ENCODE measurements at regions of chr15 and their contacts with region 1.

Region 1: DNA sequence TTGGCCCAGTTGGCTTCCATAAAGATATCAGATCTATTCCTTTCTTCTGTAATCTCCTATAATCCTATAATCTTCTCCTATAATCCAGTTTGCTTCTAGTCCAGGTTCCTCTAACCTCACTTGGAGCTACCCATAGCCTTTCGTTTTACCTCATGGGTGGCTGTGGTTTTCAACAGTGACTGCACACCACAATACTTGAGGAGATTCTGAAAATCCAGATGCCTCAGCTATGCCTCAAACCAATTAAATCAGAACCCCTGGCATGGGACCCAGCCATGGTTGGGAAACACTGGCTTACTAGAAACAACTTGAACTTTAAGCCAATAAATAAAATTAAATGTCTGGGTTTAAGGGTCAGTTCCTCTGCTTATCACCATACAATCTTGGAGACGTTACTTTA is 86.1 kb upstream of the NTRK3 start:
- DNase-seq: no peak
- H3K4me3 Mint-ChIP-seq: no peak overlapping the region
- H3K27ac Mint-ChIP-seq: no peak overlapping the region
- H3K4me1 Mint-ChIP-seq: no peaks in the 10 kb centered on the region
- H3K27me3 Mint-ChIP-seq: peaks cover 39% of the 10 kb centered on the region
- CTCF ChIP-seq: no peak

Region 2: DNA sequence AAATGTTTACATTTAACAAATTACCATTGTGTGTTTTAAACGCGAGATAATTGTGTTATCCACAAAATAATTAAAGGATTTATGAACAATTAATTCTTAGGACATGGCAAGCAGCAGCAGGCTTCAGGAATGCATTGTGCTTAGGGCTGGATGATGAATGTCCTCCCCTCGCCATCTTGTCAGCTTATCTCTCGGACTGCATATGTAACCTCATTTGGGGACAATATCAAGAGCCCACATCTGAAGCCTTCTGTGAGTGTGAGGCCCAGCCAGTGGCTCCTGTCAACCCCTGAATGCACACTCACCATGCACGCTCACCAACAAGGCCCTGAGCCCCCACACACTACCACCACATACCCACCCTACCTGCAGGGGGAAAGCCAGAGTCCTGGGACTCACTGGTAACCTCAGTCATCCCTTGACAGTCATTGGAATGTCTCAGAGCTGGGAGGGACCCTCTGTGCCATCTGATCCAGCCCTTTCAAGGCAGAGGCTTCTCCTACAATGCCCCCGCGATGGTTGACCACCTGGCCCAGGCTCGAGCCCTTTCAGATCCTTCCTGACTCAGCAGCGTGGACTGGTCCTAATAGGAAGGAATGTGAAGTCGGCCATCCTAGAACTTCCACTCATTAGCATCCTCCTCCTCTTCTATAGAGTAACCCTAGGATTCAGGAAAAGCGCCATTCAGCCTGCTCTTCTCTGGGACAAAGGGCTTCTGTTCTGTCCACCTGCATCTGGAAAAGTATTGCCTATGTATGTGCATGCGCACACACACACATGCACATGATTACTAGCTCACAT is 86.3 kb after region 1 on chr15:
- CTCF ChIA-PET with region 1: no interaction called
- intact Hi-C with region 1: no loop called
- DNase-seq: no peak
- H3K4me3 Mint-ChIP-seq: no peak overlapping the region
- H3K27ac Mint-ChIP-seq: no peak overlapping the region
- H3K4me1 Mint-ChIP-seq: no peaks in the 10 kb centered on the region
- H3K27me3 Mint-ChIP-seq: peaks cover 68% of the 10 kb centered on the region
- CTCF ChIP-seq: no peak

Region 3: DNA sequence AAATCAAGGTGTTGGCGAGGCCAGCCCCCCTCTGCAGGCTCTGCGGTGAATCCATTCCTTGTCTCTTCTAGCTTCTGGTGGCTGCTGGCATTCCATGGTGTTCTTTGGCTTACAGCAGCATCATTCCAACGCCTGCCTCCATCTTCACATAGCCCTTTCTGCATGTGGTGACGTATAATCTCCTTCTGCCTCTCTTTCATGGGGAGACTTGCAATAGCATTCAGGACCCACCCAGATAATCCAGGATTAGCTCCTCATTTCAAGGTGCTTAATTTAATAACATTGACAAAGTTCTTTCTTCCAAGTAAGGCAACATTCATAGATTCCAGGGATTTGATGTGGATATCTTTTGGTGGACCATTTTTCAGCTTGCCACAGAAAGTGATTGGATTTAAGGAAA is 332.0 kb after region 1 on chr15:
- CTCF ChIA-PET with region 1: no interaction called
- intact Hi-C with region 1: loop called (anchors 10 kb)
- DNase-seq: no peak
- H3K4me3 Mint-ChIP-seq: no peak overlapping the region
- H3K27ac Mint-ChIP-seq: no peak overlapping the region
- H3K4me1 Mint-ChIP-seq: no peaks in the 10 kb centered on the region
- H3K27me3 Mint-ChIP-seq: peaks cover 74% of the 10 kb centered on the region
- CTCF ChIP-seq: no peak

Measured in Calu3 (cell line).